Activated naive CD4-positive, alpha-beta T cell treated with anti-CD3 and anti-CD28 coated beads for 36 hours (primary cell): ENCODE measurements at regions of chr11 and their contacts with region 1.

Region 1: GRCh38 chr11:57741132-57742086 is at the start of gene SELENOH:
- DNase-seq: peak; percentile 98
- H3K4me3 Mint-ChIP-seq: peak within 1 kb of the TSS; percentile 97
- H3K27ac Mint-ChIP-seq: peak within 1 kb of the TSS; percentile 99
- H3K4me1 Mint-ChIP-seq: peaks cover 32% of the 10 kb centered on the region
- H3K27me3 Mint-ChIP-seq: no peaks in the 10 kb centered on the region
- total RNA-seq, gene SELENOH: 249 to 282 TPM

Region 2: GRCh38 chr11:57335343-57336110 is 405.9 kb before region 1 on chr11 and contains the start of gene SSRP1:
- CTCF ChIA-PET with region 1: no interaction called
- intact Hi-C with region 1: loop called (anchors 5 kb)
- DNase-seq: peak; percentile 93
- H3K4me3 Mint-ChIP-seq: peak within 1 kb of the TSS; percentile 91
- H3K27ac Mint-ChIP-seq: peak within 1 kb of the TSS; percentile 99
- H3K4me1 Mint-ChIP-seq: peaks cover 41% of the 10 kb centered on the region
- H3K27me3 Mint-ChIP-seq: no peaks in the 10 kb centered on the region
- total RNA-seq, gene SSRP1: 304 to 322 TPM

Region 3: GRCh38 chr11:57667736-57668435 is 73.5 kb before region 1 on chr11 and contains the start of gene ZDHHC5:
- CTCF ChIA-PET with region 1: no interaction called
- intact Hi-C with region 1: loop called (anchors 1 kb)
- DNase-seq: peak; percentile 99
- H3K4me3 Mint-ChIP-seq: peak within 1 kb of the TSS; percentile 91
- H3K27ac Mint-ChIP-seq: peak within 1 kb of the TSS; percentile 97
- H3K4me1 Mint-ChIP-seq: peaks cover 43% of the 10 kb centered on the region
- H3K27me3 Mint-ChIP-seq: no peaks in the 10 kb centered on the region
- total RNA-seq, gene ZDHHC5: 38.5 to 46.6 TPM

Region 4: GRCh38 chr11:57729479-57729878 is 11.9 kb before region 1 on chr11:
- CTCF ChIA-PET with region 1: no interaction called
- intact Hi-C with region 1: no loop called
- DNase-seq: no peak
- H3K4me3 Mint-ChIP-seq: no peak overlapping the region
- H3K27ac Mint-ChIP-seq: no peak overlapping the region
- H3K4me1 Mint-ChIP-seq: peaks cover 11% of the 10 kb centered on the region
- H3K27me3 Mint-ChIP-seq: no peaks in the 10 kb centered on the region

Region 5: DNA sequence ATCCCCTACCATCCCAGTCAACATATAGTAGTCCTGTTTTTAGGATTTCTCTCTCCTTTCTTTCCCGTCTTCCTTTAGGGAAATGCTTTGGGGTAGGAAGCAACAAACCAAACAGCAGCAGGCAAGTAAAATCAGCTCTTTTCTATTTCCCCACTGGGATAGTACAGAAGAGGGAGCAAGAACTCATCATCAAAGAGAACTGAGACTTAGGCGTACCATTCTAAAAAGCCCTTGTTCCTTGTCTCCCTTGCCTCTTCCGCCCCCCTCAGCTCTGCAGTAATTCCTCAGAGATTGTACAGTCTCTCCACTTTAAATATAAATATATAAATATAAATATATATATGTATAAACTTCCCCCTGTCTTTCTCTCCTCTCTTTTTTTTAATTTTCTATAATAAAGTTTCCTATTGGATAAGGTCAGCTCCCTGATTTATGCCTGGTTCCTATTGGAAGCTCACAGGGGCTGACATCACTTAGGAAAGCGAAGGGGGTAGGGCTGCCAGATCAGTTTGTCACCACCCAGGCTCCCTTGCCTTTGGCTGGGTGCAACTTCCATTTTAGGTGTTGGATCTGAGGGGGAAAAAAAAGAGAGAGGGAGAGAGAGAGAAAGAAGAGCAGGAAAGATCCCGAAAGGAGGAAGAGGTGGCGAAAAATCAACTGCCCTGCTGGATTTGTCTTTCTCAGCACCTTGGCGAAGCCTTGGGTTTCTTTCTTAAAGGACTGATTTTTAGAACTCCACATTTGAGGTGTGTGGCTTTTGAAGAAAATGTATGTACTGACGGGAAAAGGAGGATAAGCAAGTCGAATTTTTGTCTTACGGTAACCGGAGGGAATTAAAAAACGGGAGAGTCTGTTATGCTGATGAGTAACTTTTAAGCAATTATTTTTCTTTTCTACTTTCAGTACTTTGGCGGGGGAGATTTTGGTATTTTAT is 20.2 kb after region 1 on chr11 and contains the start of gene CTNND1:
- CTCF ChIA-PET with region 1: no interaction called
- intact Hi-C with region 1: loop called (anchors 1 kb)
- DNase-seq: peak; percentile 33
- H3K4me3 Mint-ChIP-seq: peak within 1 kb of the TSS; percentile 74
- H3K27ac Mint-ChIP-seq: peak within 1 kb of the TSS; percentile 6
- H3K4me1 Mint-ChIP-seq: peaks cover 29% of the 10 kb centered on the region
- H3K27me3 Mint-ChIP-seq: no peaks in the 10 kb centered on the region
- total RNA-seq, gene CTNND1: 5.5 to 8.5 TPM

Region 6: GRCh38 chr11:59142530-59143507 is 1401.4 kb after region 1 on chr11 and contains the start of gene FAM111A:
- CTCF ChIA-PET with region 1: no interaction called
- intact Hi-C with region 1: loop called (anchors 10 kb)
- DNase-seq: peak; percentile 88
- H3K4me3 Mint-ChIP-seq: peak within 1 kb of the TSS; percentile 95
- H3K27ac Mint-ChIP-seq: peak within 1 kb of the TSS; percentile 91
- H3K4me1 Mint-ChIP-seq: peaks cover 40% of the 10 kb centered on the region
- H3K27me3 Mint-ChIP-seq: no peaks in the 10 kb centered on the region
- total RNA-seq, gene FAM111A: 98.3 to 99.4 TPM